CD4-positive, alpha-beta memory T cell (primary cell): ENCODE measurements at regions of chr11 and their contacts with region 1.

Region 1: DNA sequence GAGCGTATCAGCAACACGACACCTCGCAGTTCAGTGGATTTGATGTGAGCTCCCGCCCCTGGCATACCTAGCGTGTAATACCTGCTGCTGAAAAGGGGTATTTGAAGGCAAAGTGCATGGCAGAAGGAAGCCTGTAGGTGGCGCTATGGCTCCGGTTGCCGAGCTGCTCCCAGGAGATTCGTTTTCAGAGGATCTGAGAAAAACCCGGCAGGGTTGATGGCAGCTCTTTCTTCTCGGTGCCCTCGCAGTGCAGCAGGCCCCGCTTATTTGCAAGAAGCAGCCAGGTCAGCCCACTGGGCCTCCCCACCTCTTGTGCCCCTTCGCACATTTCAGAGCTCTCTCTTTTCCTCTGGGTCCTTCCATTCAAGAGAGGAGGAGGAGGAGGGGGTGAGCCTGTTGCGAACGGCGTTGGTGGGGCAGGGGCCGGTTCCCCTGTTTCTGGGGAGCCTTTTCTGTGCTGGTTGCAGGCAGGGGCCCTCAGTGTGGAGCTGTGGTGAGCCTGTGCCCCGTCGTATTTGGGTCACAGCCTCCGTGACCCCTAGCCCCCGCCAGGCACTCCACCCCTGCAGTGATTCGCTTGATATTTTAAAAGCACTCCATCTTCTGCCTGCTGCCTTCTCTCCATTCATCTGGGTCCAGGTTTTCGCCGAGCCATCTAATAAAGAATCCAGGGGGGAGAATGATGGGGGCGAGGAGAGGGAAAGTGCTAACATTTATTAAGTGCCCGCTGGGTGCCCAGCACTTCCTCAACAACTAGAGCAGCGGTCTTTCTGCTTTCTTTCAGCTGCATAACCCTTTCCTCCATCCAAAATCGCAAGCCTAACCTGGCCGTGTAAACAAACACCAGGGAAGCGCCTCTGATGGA is 85.3 kb upstream of the SYT13 start:
- DNase-seq: peak; percentile 57 to 69 (median 65)
- H3K4me3 ChIP-seq: no peak overlapping the region
- H3K4me3 Mint-ChIP-seq: peak overlapping the region in 3 of 8 donors; percentile 12 to 52 (median 36)
- H3K27ac ChIP-seq: no peak overlapping the region
- H3K27ac Mint-ChIP-seq: peak overlapping the region in 4 of 7 donors; percentile 68 to 78 (median 72)
- H3K4me1 ChIP-seq: peaks cover 35% of the 10 kb centered on the region
- H3K4me1 Mint-ChIP-seq: peaks cover 20 to 52% (median 26%) of the 10 kb centered on the region in 4 donors
- H3K27me3 ChIP-seq: no peaks in the 10 kb centered on the region
- H3K27me3 Mint-ChIP-seq: peaks cover 8 to 11% of the 10 kb centered on the region in 2 donors

Region 2: GRCh38 chr11:45383224-45383623 is 11.7 kb after region 1 on chr11:
- CTCF ChIA-PET with region 1: interaction called, 23 read pairs
- POLR2A ChIA-PET with region 1: no interaction called
- intact Hi-C with region 1: no loop called
- DNase-seq: no peak
- H3K4me3 ChIP-seq: no peak overlapping the region
- H3K4me3 Mint-ChIP-seq: peak overlapping the region in 3 of 8 donors; percentile 2 to 16 (median 3)
- H3K27ac ChIP-seq: no peak overlapping the region
- H3K27ac Mint-ChIP-seq: peak overlapping the region in 5 of 7 donors; percentile 43 to 77 (median 60)
- H3K4me1 ChIP-seq: peaks cover 43% of the 10 kb centered on the region
- H3K4me1 Mint-ChIP-seq: peaks cover 16 to 38% (median 31%) of the 10 kb centered on the region in 4 donors
- H3K27me3 ChIP-seq: no peaks in the 10 kb centered on the region
- H3K27me3 Mint-ChIP-seq: peaks cover 0 to 2% of the 10 kb centered on the region in 2 donors

Region 3: DNA sequence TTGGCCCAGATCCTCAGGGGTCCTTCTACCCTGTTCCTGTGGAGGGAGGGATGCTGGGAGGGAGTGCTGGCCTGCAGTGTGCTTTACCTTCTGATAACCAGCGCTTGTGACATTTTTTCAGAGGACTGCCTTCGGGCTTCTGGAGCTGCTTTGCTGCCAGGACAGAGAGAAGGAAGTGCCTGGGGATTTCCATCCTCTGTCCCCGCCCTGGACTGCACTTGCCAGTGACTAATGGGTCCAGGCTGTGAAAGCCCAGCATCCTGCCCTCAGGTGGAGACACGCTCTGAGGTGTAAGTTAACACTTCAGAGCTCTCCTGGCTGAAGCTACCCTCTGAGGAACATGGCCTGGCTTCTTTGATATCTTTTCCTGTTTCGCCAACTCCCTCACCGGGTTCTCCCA is 73.3 kb after region 1 on chr11:
- CTCF ChIA-PET with region 1: no interaction called
- POLR2A ChIA-PET with region 1: no interaction called
- intact Hi-C with region 1: no loop called
- DNase-seq: no peak
- H3K4me3 ChIP-seq: no peak overlapping the region
- H3K4me3 Mint-ChIP-seq: no peak overlapping the region
- H3K27ac ChIP-seq: no peak overlapping the region
- H3K27ac Mint-ChIP-seq: no peak overlapping the region
- H3K4me1 ChIP-seq: no peaks in the 10 kb centered on the region
- H3K4me1 Mint-ChIP-seq: no peaks in the 10 kb centered on the region
- H3K27me3 ChIP-seq: no peaks in the 10 kb centered on the region
- H3K27me3 Mint-ChIP-seq: peaks cover 11 to 16% of the 10 kb centered on the region in 2 donors

Region 4: GRCh38 chr11:45655347-45655756 is 283.9 kb after region 1 on chr11:
- CTCF ChIA-PET with region 1: interaction called, 95 read pairs
- POLR2A ChIA-PET with region 1: no interaction called
- intact Hi-C with region 1: no loop called
- DNase-seq: peak in 4 of 5 donors; percentile 32 to 46 (median 38)
- H3K4me3 ChIP-seq: no peak overlapping the region
- H3K4me3 Mint-ChIP-seq: peak overlapping the region in 1 of 8 donors; percentile 20
- H3K27ac ChIP-seq: no peak overlapping the region
- H3K27ac Mint-ChIP-seq: no peak overlapping the region
- H3K4me1 ChIP-seq: peaks cover 6% of the 10 kb centered on the region
- H3K4me1 Mint-ChIP-seq: peaks cover 0 to 10% (median 2%) of the 10 kb centered on the region in 4 donors
- H3K27me3 ChIP-seq: no peaks in the 10 kb centered on the region
- H3K27me3 Mint-ChIP-seq: peaks cover 13 to 41% of the 10 kb centered on the region in 2 donors